ENCODE measurements at regions of chr3 and their contacts with region 1.

Region 1: DNA sequence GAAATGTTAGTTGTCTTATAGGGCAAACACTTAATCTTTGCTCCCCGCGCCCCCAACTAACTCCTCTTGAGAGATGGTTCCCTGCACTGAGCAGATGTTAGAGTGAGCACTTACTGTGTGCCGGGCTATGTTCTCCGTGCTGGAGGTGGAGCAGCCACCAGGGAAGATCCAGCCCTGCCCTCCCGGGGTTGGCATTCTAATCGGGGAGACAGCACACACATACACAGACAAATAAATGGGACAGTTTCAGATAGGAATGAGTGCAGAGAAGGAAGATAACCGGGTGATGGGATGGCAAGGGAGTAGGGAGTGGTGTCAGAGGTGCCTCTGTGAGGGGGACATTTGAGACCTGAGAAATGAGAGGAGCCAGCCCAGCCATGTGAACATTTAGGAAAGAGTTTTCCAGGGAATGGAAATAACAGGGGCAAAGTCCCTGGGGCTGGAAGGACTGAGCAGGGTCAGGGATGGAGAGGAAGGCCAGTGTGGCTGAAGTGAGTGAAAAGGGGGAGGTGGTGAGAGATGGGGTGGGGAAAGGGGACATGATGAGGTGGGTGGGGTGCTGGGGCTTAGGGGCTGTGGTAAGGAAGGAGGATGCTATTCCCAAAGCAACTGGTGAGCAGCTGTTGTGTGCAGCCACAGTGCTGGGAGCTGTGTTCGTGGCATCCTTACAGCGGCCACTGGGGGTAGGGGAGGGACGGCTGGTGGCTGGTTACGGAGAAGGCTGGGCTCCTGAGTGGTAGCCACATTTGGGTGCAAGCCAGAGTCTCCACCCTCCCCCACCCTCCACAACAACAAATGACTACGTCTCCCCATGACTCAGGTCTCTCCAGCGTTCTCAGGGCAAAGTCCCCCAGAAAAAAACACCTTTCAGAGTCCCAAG is 15.4 kb upstream of the FGD5 start:
- DNase-seq: peak; percentile 70
- H3K4me3 ChIP-seq: no peak overlapping the region
- H3K27ac ChIP-seq: peak overlapping the region; percentile 93
- H3K4me1 ChIP-seq: peaks cover 44% of the 10 kb centered on the region
- H3K27me3 ChIP-seq: no peaks in the 10 kb centered on the region
- CTCF ChIP-seq: peak in 1 of 2 donors; percentile 41
- POLR2A ChIP-seq: no peak

Region 2: DNA sequence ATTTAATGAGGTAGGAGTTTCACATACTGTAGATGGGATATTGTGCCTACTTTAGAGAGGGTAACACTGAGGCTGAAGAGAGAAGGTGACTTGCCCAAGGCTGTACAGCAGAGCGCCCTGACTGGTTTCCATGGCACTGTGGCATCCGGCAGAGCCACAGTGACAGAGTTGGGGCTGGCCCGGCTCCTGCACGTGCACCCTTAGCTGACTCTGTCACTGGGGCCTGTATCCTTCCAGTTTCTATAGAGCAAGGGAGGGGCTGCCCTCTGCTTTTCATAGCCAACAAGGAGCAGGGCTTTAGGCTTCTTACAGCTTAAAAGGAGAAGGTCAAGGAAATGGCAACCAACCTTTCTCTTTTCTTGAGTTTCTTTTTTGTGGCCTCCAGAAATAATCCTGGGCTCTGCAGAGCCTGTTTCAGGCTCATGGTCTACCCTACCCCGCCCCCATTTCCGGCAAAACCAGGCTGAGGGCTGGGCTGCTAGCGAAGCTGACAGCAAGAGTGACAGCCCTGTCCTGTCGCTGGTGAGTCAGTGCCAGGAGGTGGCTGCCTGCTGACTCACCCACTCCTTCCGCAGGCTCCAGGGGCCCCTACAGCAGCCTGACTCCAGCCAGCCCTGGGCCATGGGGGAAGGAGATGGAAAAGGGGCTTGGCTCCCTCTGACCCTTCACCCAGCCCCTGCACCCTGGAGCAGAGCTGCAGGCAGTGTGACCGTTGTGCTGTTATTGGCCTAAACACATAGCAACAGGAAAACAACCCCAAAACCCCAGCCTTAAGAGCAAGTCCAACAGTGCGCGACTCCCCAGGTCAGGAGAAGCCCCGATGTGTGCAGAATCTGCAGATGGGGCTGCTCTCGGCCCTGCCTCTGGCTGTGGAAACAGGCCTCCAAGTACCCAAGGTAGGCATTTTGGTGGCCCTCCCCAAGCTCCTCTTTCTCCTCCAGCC is 371.2 kb before region 1 on chr3:
- CTCF ChIA-PET with region 1: no interaction called
- POLR2A ChIA-PET with region 1: no interaction called
- dilution Hi-C with region 1: no loop called
- intact Hi-C with region 1: loop called (anchors 10 kb)
- DNase-seq: peak; percentile 83
- H3K4me3 ChIP-seq: no peak overlapping the region
- H3K27ac ChIP-seq: peak overlapping the region; percentile 77
- H3K4me1 ChIP-seq: peaks cover 56% of the 10 kb centered on the region
- H3K27me3 ChIP-seq: no peaks in the 10 kb centered on the region
- CTCF ChIP-seq: no peak
- POLR2A ChIP-seq: no peak

Region 3: GRCh38 chr3:14774431-14774830 is 28.9 kb before region 1 on chr3:
- CTCF ChIA-PET with region 1: no interaction called
- POLR2A ChIA-PET with region 1: no interaction called
- dilution Hi-C with region 1: no loop called
- intact Hi-C with region 1: no loop called
- DNase-seq: no peak
- H3K4me3 ChIP-seq: no peak overlapping the region
- H3K27ac ChIP-seq: no peak overlapping the region
- H3K4me1 ChIP-seq: no peaks in the 10 kb centered on the region
- H3K27me3 ChIP-seq: no peaks in the 10 kb centered on the region
- CTCF ChIP-seq: no peak
- POLR2A ChIP-seq: no peak

Region 4: DNA sequence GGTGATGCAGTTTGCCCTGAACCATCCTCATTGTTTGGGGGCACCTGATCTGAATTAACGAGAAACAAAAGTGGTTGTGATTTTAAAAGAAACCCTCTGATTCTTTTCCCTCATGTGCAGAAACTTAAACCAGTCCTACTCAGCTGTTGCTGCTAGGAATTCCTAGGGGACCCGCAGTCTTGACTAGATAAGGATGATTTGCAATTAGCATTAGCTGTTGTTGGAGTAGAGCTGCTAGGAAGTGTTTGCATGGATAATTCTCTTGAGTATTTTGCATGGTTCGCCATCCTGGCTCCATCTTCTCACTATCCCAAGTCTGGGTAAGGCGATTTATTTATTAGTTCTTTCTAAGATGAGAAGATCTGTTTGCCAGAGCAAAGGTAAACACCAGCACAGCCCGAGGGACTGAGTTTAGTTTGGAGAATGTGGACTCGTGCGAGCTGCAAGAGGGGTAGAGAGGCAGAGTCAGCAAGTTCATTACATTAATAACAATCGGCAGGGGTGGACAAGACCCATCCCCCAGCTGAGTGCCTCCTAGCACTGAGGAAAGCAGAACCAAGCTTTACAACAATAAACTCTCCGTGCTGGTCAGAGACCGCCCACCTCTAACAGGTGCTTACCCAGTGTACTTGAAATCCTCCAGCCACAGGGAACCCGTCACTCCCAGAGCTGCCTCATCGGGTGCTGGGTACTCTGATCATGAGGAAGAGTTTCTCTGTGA is 19.5 kb after region 1 on chr3:
- CTCF ChIA-PET with region 1: interaction called, 5 read pairs
- POLR2A ChIA-PET with region 1: no interaction called
- dilution Hi-C with region 1: no loop called
- intact Hi-C with region 1: loop called (anchors 2 kb)
- DNase-seq: peak; percentile 32
- H3K4me3 ChIP-seq: no peak overlapping the region
- H3K27ac ChIP-seq: peak overlapping the region; percentile 14
- H3K4me1 ChIP-seq: peaks cover 26% of the 10 kb centered on the region
- H3K27me3 ChIP-seq: no peaks in the 10 kb centered on the region
- CTCF ChIP-seq: no peak
- POLR2A ChIP-seq: no peak

Region 5: GRCh38 chr3:14890476-14890875 is 87.1 kb after region 1 on chr3:
- CTCF ChIA-PET with region 1: no interaction called
- POLR2A ChIA-PET with region 1: no interaction called
- dilution Hi-C with region 1: no loop called
- intact Hi-C with region 1: no loop called
- DNase-seq: peak; percentile 40
- H3K4me3 ChIP-seq: no peak overlapping the region
- H3K27ac ChIP-seq: no peak overlapping the region
- H3K4me1 ChIP-seq: peaks cover 9% of the 10 kb centered on the region
- H3K27me3 ChIP-seq: no peaks in the 10 kb centered on the region
- CTCF ChIP-seq: no peak
- POLR2A ChIP-seq: no peak

Region 6: GRCh38 chr3:15042936-15043335 is 239.6 kb after region 1 on chr3:
- CTCF ChIA-PET with region 1: no interaction called
- POLR2A ChIA-PET with region 1: no interaction called
- dilution Hi-C with region 1: no loop called
- intact Hi-C with region 1: loop called (anchors 10 kb)
- DNase-seq: peak; percentile 76
- H3K4me3 ChIP-seq: no peak overlapping the region
- H3K27ac ChIP-seq: peak overlapping the region; percentile 71
- H3K4me1 ChIP-seq: peaks cover 36% of the 10 kb centered on the region
- H3K27me3 ChIP-seq: no peaks in the 10 kb centered on the region
- CTCF ChIP-seq: no peak
- POLR2A ChIP-seq: no peak